Activated CD4-positive, alpha-beta T cell treated with anti-CD3 and anti-CD28 coated beads, Interleukin-2, amount 10 ng/mL, durations not matched to agents 24 days and 14 days (primary cell): ENCODE measurements at regions of chr15 and their contacts with region 1.

Region 1: GRCh38 chr15:81286621-81287121 is 37.3 kb downstream of the STARD5 start:
- DNase-seq: peak; percentile 71
- H3K4me3 Mint-ChIP-seq: peak overlapping the region; percentile 71
- H3K27ac Mint-ChIP-seq: peak overlapping the region; percentile 85
- H3K4me1 Mint-ChIP-seq: peaks cover 62% of the 10 kb centered on the region
- H3K27me3 Mint-ChIP-seq: no peaks in the 10 kb centered on the region

Region 2: GRCh38 chr15:81239190-81239589 is 47.5 kb before region 1 on chr15:
- intact Hi-C with region 1: no loop called
- DNase-seq: no peak
- H3K4me3 Mint-ChIP-seq: no peak overlapping the region
- H3K27ac Mint-ChIP-seq: no peak overlapping the region
- H3K4me1 Mint-ChIP-seq: no peaks in the 10 kb centered on the region
- H3K27me3 Mint-ChIP-seq: peaks cover 4% of the 10 kb centered on the region

Region 3: GRCh38 chr15:81265944-81266775 is 20.5 kb before region 1 on chr15:
- intact Hi-C with region 1: no loop called
- DNase-seq: peak; percentile 95
- H3K4me3 Mint-ChIP-seq: peak overlapping the region; percentile 64
- H3K27ac Mint-ChIP-seq: peak overlapping the region; percentile 64
- H3K4me1 Mint-ChIP-seq: peaks cover 26% of the 10 kb centered on the region
- H3K27me3 Mint-ChIP-seq: peaks cover 5% of the 10 kb centered on the region

Region 4: GRCh38 chr15:81301815-81302399 is 15.2 kb after region 1 on chr15:
- intact Hi-C with region 1: loop called (anchors 2 kb)
- DNase-seq: peak; percentile 84
- H3K4me3 Mint-ChIP-seq: peak overlapping the region; percentile 94
- H3K27ac Mint-ChIP-seq: peak overlapping the region; percentile 89
- H3K4me1 Mint-ChIP-seq: peaks cover 77% of the 10 kb centered on the region
- H3K27me3 Mint-ChIP-seq: no peaks in the 10 kb centered on the region

Region 5: DNA sequence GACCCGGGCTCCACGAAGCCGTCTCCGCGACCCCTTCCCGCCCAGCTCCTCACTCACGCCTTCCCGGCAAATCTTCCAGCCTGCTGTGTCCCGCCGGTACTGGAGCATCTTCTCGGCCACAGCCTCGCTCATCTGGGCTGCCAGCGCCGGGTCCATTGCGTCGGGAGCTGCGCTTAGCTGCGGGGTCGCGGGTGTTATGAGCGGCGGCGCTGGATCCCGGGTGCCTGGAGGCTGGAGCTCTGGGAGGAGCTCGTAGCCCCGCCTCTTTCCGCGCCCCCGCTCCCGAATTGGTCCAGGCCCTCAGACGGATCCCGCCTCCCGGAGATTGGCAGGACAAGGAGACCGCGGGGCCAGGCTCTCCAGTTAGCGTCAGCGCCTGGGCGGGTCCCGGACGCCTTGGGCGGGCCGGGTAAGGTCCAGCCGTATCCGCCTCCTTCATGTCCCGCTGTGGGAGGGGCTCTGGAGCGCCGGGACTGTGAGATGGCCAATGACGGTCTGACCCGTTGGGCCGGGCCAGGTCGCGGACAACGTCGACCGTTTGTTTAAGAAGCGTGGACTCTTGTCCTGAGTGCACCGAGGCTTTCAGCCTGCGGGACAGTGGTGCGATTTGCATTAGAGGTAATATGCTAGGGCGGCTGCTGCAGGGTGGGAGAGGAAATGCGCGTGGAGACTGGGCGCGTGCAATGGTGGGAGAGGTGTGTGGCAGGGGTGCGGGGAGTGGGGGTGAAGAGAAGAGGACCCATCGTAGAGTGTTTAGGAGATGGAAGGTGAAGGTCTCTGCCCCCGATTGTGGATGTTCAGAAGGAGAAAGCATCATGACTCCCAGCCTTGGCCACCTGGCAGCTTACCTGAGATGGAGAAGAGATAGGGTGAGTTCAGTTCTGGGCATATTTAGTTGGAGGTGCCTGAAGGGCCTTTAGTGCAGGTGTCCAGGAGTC is 37.5 kb after region 1 on chr15 and contains the start of gene STARD5:
- intact Hi-C with region 1: loop called (anchors 5 kb)
- DNase-seq: peak; percentile 100
- H3K4me3 Mint-ChIP-seq: peak within 1 kb of the TSS; percentile 91
- H3K27ac Mint-ChIP-seq: peak within 1 kb of the TSS; percentile 73
- H3K4me1 Mint-ChIP-seq: peaks cover 23% of the 10 kb centered on the region
- H3K27me3 Mint-ChIP-seq: no peaks in the 10 kb centered on the region
- total RNA-seq, gene STARD5: 4.6 and 5.8 TPM in 2 replicates

Region 6: GRCh38 chr15:81929557-81929956 is 642.9 kb after region 1 on chr15:
- intact Hi-C with region 1: no loop called
- DNase-seq: no peak
- H3K4me3 Mint-ChIP-seq: no peak overlapping the region
- H3K27ac Mint-ChIP-seq: no peak overlapping the region
- H3K4me1 Mint-ChIP-seq: no peaks in the 10 kb centered on the region
- H3K27me3 Mint-ChIP-seq: peaks cover 3% of the 10 kb centered on the region